ENCODE measurements at regions of chr19 and their contacts with region 1.

Region 1: GRCh38 chr19:2840794-2841790 is at the start of gene ZNF555:
- DNase-seq: peak; percentile 100
- H3K4me3 ChIP-seq: peak within 1 kb of the TSS; percentile 73
- H3K27ac ChIP-seq: peak within 1 kb of the TSS; percentile 78
- H3K4me1 ChIP-seq: peaks cover 23% of the 10 kb centered on the region
- CTCF ChIP-seq: peak; percentile 61
- total RNA-seq, gene ZNF555: 2.4 and 2.8 TPM in 2 replicates

Region 2: GRCh38 chr19:2782936-2783780 is 57.9 kb before region 1 on chr19 and contains the start of gene SGTA:
- CTCF ChIA-PET with region 1: no interaction called
- POLR2A ChIA-PET with region 1: interaction called, 5 read pairs
- intact Hi-C with region 1: loop called (anchors 2 kb)
- DNase-seq: peak; percentile 100
- H3K4me3 ChIP-seq: peak within 1 kb of the TSS; percentile 97
- H3K27ac ChIP-seq: peak within 1 kb of the TSS; percentile 79
- H3K4me1 ChIP-seq: peaks cover 59% of the 10 kb centered on the region
- CTCF ChIP-seq: peak; percentile 50
- total RNA-seq, gene SGTA: 67.5 and 82.4 TPM in 2 replicates

Region 3: DNA sequence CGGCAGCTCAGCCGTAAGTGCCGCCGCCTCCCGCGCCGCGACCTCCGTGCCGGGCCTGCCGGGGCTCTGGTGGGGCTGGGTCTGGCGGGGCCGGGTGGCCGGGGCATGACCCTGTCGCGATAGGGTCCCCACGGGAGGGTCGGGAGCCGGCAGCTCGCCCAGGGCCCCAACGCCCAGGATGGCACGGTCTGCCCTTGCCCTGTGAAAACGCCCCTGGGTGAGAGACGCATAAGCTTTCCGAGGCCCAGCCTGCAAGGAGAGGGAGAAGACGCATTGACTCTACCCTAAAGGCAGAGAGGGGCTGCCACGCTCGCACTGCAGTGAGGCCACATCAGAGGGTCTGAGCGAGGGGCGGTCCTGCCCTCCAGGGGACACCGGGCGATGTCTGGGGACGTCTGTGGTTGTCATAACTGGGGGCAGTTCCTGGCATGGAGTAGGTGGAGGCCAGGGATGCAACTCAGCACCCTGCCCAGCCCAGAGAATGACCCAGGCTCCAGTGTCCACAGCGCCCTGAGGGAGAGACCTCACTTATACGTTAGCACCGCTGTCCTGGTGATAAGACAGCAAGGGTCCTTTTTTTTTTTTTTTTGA is 20.9 kb before region 1 on chr19:
- CTCF ChIA-PET with region 1: no interaction called
- POLR2A ChIA-PET with region 1: no interaction called
- intact Hi-C with region 1: loop called (anchors 2 kb)
- DNase-seq: peak; percentile 23
- H3K4me3 ChIP-seq: peak overlapping the region; percentile 85
- H3K27ac ChIP-seq: no peak overlapping the region
- H3K4me1 ChIP-seq: peaks cover 4% of the 10 kb centered on the region
- CTCF ChIP-seq: no peak

Region 4: GRCh38 chr19:2933490-2933910 is 92.4 kb after region 1 on chr19:
- CTCF ChIA-PET with region 1: no interaction called
- POLR2A ChIA-PET with region 1: no interaction called
- intact Hi-C with region 1: no loop called
- DNase-seq: no peak
- H3K4me3 ChIP-seq: no peak overlapping the region
- H3K27ac ChIP-seq: no peak overlapping the region
- H3K4me1 ChIP-seq: no peaks in the 10 kb centered on the region
- CTCF ChIP-seq: no peak